Activated CD4-positive, alpha-beta memory T cell treated with anti-CD3 and anti-CD28 coated beads for 36 hours (primary cell): ENCODE measurements at regions of chr7 and their contacts with region 1.

Region 1: DNA sequence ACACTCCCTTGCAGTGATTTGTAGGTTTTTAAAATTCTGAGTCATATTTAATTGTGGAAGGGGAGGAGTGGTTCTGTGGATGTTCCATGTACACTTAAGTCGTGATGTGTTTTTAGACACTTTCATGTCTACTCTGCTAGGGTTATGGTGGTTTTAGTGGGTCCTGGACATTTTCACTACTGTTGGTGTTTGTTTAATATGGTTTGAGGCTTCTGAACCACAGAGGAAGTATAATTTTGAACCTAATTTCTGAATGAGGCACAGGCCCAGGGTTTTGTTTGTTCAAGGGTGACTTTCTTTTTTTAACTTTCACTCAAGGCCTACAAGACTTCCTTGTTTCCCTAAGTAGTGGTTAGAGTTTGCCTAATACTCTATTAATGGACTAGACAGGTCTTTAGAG is 13.3 kb downstream of the SLC26A5 start:
- DNase-seq: no peak
- H3K4me3 Mint-ChIP-seq: no peak overlapping the region
- H3K27ac Mint-ChIP-seq: no peak overlapping the region
- H3K4me1 Mint-ChIP-seq: no peaks in the 10 kb centered on the region
- H3K27me3 Mint-ChIP-seq: peaks cover 20% of the 10 kb centered on the region

Region 2: DNA sequence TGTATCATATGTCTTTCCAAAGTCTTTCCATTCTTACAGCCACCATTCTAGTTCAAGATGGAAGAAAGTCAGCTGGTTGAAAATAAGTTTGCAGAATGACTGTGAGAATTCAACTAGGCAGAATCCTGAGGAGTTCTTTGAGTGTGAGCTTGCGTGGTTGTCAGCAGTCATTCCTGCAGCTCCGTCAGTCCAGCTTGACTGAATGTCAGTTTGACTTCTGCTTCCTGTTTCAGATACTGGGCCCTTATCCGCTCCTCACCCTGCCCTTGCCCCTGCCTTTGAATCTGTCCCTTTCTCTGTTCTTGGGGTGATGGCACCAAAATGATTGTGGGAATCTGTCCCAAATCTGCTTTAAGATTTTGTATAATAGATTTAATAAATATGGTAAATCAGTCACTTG is 14.5 kb before region 1 on chr7:
- CTCF ChIA-PET with region 1: no interaction called
- POLR2A ChIA-PET with region 1: no interaction called
- intact Hi-C with region 1: no loop called
- DNase-seq: no peak
- H3K4me3 Mint-ChIP-seq: no peak overlapping the region
- H3K27ac Mint-ChIP-seq: no peak overlapping the region
- H3K4me1 Mint-ChIP-seq: no peaks in the 10 kb centered on the region
- H3K27me3 Mint-ChIP-seq: peaks cover 6% of the 10 kb centered on the region

Region 3: GRCh38 chr7:103499907-103500306 is 67.2 kb after region 1 on chr7:
- CTCF ChIA-PET with region 1: no interaction called
- POLR2A ChIA-PET with region 1: no interaction called
- intact Hi-C with region 1: loop called (anchors 2 kb)
- DNase-seq: no peak
- H3K4me3 Mint-ChIP-seq: no peak overlapping the region
- H3K27ac Mint-ChIP-seq: no peak overlapping the region
- H3K4me1 Mint-ChIP-seq: no peaks in the 10 kb centered on the region
- H3K27me3 Mint-ChIP-seq: peaks cover 3% of the 10 kb centered on the region

Region 4: GRCh38 chr7:103637094-103637493 is 204.4 kb after region 1 on chr7:
- CTCF ChIA-PET with region 1: no interaction called
- POLR2A ChIA-PET with region 1: no interaction called
- intact Hi-C with region 1: no loop called
- DNase-seq: no peak
- H3K4me3 Mint-ChIP-seq: no peak overlapping the region
- H3K27ac Mint-ChIP-seq: no peak overlapping the region
- H3K4me1 Mint-ChIP-seq: no peaks in the 10 kb centered on the region
- H3K27me3 Mint-ChIP-seq: peaks cover 11% of the 10 kb centered on the region

Region 5: DNA sequence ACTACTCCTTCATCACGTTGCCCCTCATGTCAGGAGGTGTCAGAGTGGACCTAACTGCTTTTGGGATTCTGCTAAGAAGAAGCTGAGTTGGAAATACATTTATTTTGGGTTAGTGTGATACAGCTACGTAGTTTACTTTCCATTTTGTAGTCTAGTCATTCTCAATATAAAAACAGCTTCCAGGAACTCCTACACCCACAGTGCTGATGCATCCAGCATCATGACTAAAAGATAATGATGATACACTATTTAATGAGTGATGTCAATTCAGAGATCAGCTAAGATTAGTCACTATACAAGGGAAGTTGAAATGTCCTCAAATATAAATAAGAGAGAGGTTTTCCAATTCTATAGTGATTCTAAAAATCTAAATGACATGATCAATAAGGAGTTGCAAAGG is 277.5 kb after region 1 on chr7:
- CTCF ChIA-PET with region 1: no interaction called
- POLR2A ChIA-PET with region 1: no interaction called
- intact Hi-C with region 1: no loop called
- DNase-seq: no peak
- H3K4me3 Mint-ChIP-seq: no peak overlapping the region
- H3K27ac Mint-ChIP-seq: no peak overlapping the region
- H3K4me1 Mint-ChIP-seq: no peaks in the 10 kb centered on the region
- H3K27me3 Mint-ChIP-seq: no peaks in the 10 kb centered on the region